ENCODE measurements at regions of chr1 and their contacts with region 1.

Region 1: GRCh38 chr1:39326832-39327231 is 122.3 kb downstream of the MACF1 start:
- DNase-seq: no peak
- ATAC-seq: no peak
- H3K4me3 ChIP-seq: no peak overlapping the region
- H3K27ac ChIP-seq: no peak overlapping the region
- H3K4me1 ChIP-seq: no peaks in the 10 kb centered on the region
- H3K27me3 ChIP-seq: no peaks in the 10 kb centered on the region
- CTCF ChIP-seq: no peak

Region 2: GRCh38 chr1:39378377-39378776 is 51.5 kb after region 1 on chr1:
- intact Hi-C with region 1: no loop called
- DNase-seq: no peak
- ATAC-seq: peak in 1 of 4 donors; percentile 45
- H3K4me3 ChIP-seq: no peak overlapping the region
- H3K27ac ChIP-seq: no peak overlapping the region
- H3K4me1 ChIP-seq: no peaks in the 10 kb centered on the region
- H3K27me3 ChIP-seq: no peaks in the 10 kb centered on the region
- CTCF ChIP-seq: no peak

Region 3: GRCh38 chr1:39434797-39435395 is 108.1 kb after region 1 on chr1:
- intact Hi-C with region 1: loop called in 1 of 2 experiments (anchors 10 kb)
- DNase-seq: no peak
- ATAC-seq: peak in 3 of 4 donors; percentile 33 to 64 (median 45)
- H3K4me3 ChIP-seq: no peak overlapping the region
- H3K27ac ChIP-seq: peak overlapping the region; percentile 20
- H3K4me1 ChIP-seq: peaks cover 15% of the 10 kb centered on the region
- H3K27me3 ChIP-seq: no peaks in the 10 kb centered on the region
- CTCF ChIP-seq: no peak